Activated CD8-positive, alpha-beta memory T cell treated with anti-CD3 and anti-CD28 coated beads, Interleukin-2, amount 10 ng/mL, durations not matched to agents 7 days and 5 days (primary cell): ENCODE measurements at regions of chr12 and their contacts with region 1.

Region 1: DNA sequence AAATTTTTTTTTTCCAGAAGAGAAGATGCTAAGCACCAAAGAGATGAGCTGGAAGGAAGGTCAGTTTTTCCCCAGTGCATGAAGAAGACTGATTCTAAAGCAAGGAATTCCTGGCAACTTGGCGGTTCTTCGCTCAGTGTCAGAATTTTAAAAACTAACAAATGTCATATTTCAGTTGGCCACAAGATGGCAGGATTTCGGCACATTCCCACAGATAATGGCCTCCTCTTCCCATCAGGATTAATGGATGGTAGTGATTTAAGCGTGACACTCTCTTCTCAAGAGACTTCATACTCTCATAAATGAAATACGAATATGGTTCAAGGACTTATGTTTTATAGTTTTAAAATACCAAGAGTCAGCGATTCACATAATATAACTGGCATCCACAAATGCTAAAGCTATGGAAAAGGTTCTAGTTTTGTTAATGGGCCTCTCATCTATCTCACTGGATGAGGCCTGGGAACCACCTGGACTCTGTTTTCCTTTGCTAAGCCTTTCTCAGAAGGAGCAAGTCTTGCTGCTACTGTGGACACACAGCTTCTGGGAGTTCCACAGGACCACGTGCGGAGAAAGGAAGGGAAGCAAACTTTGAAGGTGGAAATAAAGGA is 46.1 kb upstream of the PTPRO start:
- DNase-seq: no peak
- ATAC-seq: no peak
- H3K4me3 Mint-ChIP-seq: no peak overlapping the region
- H3K27ac Mint-ChIP-seq: no peak overlapping the region
- H3K4me1 Mint-ChIP-seq: peaks cover 16% of the 10 kb centered on the region
- H3K27me3 Mint-ChIP-seq: peaks cover 2% of the 10 kb centered on the region

Region 2: GRCh38 chr12:14803011-14803829 is 473.0 kb before region 1 on chr12 and contains the starts of genes C12orf60 and WBP11:
- CTCF ChIA-PET with region 1: no interaction called
- DNase-seq: peak; percentile 95
- ATAC-seq: peak; percentile 98
- H3K4me3 Mint-ChIP-seq: no peak within 1 kb of the TSS
- H3K27ac Mint-ChIP-seq: no peak within 1 kb of the TSS
- H3K4me1 Mint-ChIP-seq: peaks cover 20% of the 10 kb centered on the region
- H3K27me3 Mint-ChIP-seq: no peaks in the 10 kb centered on the region
- total RNA-seq, gene C12orf60: 1.6 to 1.9 TPM
- total RNA-seq, gene WBP11: 102 to 116 TPM

Region 3: GRCh38 chr12:15212930-15213329 is 63.3 kb before region 1 on chr12:
- CTCF ChIA-PET with region 1: no interaction called
- DNase-seq: no peak
- ATAC-seq: no peak
- H3K4me3 Mint-ChIP-seq: no peak overlapping the region
- H3K27ac Mint-ChIP-seq: no peak overlapping the region
- H3K4me1 Mint-ChIP-seq: no peaks in the 10 kb centered on the region
- H3K27me3 Mint-ChIP-seq: peaks cover 36% of the 10 kb centered on the region

Region 4: GRCh38 chr12:15522565-15523187 is 246.5 kb after region 1 on chr12:
- CTCF ChIA-PET with region 1: interaction called, 10 read pairs
- DNase-seq: no peak
- ATAC-seq: no peak
- H3K4me3 Mint-ChIP-seq: no peak overlapping the region
- H3K27ac Mint-ChIP-seq: no peak overlapping the region
- H3K4me1 Mint-ChIP-seq: no peaks in the 10 kb centered on the region
- H3K27me3 Mint-ChIP-seq: peaks cover 38% of the 10 kb centered on the region